ENCODE measurements at regions of chr7 and their contacts with region 1.

Region 1: GRCh38 chr7:4689668-4690067 is 7.6 kb downstream of the FOXK1 start:
- DNase-seq: no peak
- H3K4me3 ChIP-seq: no peak overlapping the region
- H3K27ac ChIP-seq: no peak overlapping the region
- H3K4me1 ChIP-seq: peaks cover 36 to 100% (median 80%) of the 10 kb centered on the region in 6 donors
- H3K27me3 ChIP-seq: no peaks in the 10 kb centered on the region
- CTCF ChIP-seq: no peak
- POLR2A ChIP-seq: no peak

Region 2: GRCh38 chr7:4610768-4611467 is 78.8 kb before region 1 on chr7:
- intact Hi-C with region 1: no loop called
- DNase-seq: peak; percentile 71
- H3K4me3 ChIP-seq: no peak overlapping the region
- H3K27ac ChIP-seq: no peak overlapping the region
- H3K4me1 ChIP-seq: peaks cover 0 to 25% (median 21%) of the 10 kb centered on the region in 6 donors
- H3K27me3 ChIP-seq: peaks cover 0 to 3% (median 0%) of the 10 kb centered on the region in 7 donors
- CTCF ChIP-seq: peak; percentile 52 to 89 (median 81)
- POLR2A ChIP-seq: no peak

Region 3: DNA sequence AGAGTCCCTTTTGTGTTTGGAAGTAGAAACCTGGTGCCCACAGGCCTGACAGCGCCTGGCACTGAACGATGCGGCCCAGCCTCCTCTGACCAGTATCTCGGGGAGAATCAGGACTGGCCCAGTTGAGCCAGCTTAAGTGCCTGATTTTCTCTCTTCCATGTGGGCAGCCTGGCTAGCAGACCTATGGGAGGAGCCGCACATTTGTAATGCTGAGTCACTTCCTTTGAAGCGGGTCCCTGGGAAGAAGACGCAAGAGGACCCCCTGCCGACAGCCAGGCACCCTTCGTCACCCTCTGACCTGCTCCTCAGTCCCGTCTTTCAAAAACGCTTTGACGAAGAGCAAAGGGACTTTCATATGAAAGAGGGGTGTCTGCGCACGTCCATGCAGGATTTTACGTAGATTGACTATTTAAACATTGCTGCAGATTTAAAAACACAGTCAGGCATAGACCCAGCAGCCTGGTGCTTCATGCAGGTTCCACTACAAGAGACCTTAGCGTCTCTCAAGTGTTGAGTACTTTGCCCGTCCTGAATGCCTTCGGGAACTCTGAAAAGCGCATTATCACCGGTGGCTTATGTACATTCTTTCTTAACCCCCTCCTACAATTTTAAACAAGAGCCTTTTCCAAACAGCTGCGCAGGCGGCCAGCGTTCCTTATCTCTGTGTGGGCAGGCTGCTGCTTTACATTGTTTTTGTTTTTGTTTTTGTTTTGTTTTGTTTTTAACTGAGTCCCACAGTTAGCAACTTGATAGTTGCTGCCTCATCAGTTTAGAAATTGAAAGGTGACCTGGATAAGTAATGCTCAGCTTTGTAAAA is 49.3 kb after region 1 on chr7:
- intact Hi-C with region 1: loop called (anchors 5 kb)
- DNase-seq: no peak
- H3K4me3 ChIP-seq: peak overlapping the region in 4 of 8 donors; percentile 4 to 50 (median 20)
- H3K27ac ChIP-seq: peak overlapping the region in 7 of 8 donors; percentile 51 to 78 (median 65)
- H3K4me1 ChIP-seq: peaks cover 13 to 71% (median 31%) of the 10 kb centered on the region in 6 donors
- H3K27me3 ChIP-seq: no peaks in the 10 kb centered on the region
- CTCF ChIP-seq: no peak
- POLR2A ChIP-seq: no peak

Measured in spleen (tissue), 13 donors.